ENCODE measurements at regions of chr4 and their contacts with region 1.

Region 1: DNA sequence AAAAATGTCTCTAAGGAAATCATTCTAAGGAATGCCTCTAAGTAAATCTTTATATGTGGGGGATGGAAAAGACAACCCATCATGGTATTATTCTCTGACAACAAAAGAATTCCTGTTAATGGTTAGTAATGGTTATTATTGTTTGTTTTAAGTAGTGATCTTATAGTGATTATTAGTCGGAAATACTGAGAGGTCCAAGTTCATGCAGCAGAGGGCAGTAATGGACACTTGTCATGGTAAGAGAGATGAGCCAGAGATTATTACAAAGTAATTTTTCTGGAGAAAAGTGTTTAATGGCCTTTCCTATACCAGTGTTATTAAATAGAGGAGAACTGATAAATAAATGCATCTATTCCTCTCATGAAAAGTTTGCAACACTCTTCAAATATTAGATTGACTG is 8.1 kb upstream of the DKK2 start:
- DNase-seq: no peak

Region 2: DNA sequence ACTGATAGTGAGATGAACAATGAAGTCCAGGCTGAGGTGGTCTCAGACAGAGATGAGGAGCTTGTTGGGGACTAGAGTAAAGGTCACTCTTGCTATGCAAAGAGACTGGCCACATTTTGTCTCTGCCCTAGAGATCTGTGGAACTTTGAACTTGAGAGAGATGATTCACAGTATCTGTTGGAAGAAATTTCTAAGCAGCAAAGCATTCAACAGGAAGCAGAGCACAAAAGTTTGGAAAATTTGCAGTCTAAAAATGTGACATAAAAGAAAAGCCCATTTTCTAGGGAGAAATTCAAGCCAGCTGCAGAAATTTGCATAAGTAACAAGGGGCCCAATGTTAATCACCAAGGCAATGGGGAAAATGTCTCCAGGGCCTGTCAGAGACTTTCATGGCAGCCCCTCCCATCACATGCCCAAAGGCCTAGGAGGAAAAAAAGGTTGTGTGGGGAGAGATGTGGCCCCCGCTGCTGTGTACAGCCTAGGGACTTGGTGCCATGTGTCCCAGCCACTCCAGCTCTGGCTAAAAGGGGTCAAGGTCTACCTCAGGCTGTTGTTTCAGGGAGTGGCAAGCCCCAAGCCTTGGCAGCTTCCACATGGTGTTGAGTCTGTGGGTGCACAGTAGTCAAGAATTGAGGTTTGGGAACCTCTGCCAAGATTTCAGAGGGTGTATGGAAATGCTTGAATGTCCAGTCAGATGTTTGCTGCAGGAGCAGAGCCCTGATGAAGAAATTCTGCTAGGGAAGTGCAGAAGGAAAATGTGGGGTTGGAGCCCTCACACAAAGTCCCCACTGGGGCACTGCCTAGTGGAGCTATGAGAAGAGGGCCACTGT is 270.9 kb before region 1 on chr4:
- intact Hi-C with region 1: no loop called
- DNase-seq: no peak

Region 3: DNA sequence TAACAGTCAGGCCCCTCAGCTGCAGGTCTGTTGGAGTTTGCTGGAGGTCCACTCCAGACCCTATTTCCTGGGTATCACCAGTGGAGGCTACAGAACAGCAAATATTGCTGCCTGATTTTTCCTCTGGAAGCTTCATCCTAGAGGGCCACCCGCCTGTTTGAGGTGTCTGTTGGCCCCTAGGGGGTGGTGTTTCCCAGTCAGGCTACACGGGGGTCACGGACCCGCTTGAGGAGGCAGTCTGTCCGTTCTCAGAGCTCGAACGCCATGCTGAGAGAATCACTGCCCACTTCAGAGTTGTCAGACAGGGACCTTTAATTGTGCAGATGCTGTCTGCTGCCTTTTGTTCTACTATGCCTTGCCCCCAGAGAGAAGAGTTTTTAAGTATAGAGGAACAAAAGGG is 168.8 kb before region 1 on chr4:
- intact Hi-C with region 1: no loop called
- DNase-seq: no peak

Region 4: GRCh38 chr4:107006218-107006617 is 38.0 kb before region 1 on chr4:
- intact Hi-C with region 1: no loop called
- DNase-seq: no peak

Region 5: GRCh38 chr4:107183155-107183774 is 139.1 kb after region 1 on chr4:
- intact Hi-C with region 1: loop called (anchors 10 kb)
- DNase-seq: no peak

Measured in cardiac septum (tissue), 1 donor.